WTC11 (cell line): ENCODE measurements at regions of chr2 and their contacts with region 1.

Region 1: GRCh38 chr2:113080134-113080533 is 12.4 kb downstream of the IL1F10 start:
- DNase-seq: peak; percentile 75
- ATAC-seq: peak; percentile 96
- H3K4me3 Mint-ChIP-seq: no peak overlapping the region
- H3K27ac Mint-ChIP-seq: no peak overlapping the region
- H3K4me1 Mint-ChIP-seq: peaks cover 8% of the 10 kb centered on the region
- H3K27me3 Mint-ChIP-seq: peaks cover 26% of the 10 kb centered on the region
- CTCF ChIP-seq: peak; percentile 39; the same call in 1 of the 2 replicates

Region 2: DNA sequence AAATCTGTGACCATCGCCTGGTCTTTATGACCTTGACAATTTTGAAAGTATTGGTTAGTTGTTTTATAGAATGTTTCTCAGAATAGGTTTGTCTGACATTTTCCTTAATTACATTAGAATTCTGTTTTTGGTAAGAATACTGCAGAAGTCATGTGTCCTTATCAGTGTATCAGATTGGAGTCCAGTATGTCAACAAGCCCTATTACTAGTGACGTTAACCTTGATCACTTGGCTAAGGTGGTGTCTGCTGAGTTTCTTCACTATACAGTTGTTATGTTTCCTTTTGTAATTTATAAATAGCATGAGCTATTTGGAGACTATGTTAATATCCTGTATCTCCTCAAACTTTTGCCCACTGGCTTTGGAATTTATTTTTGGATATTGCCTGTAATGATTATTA is 113.1 kb before region 1 on chr2:
- CTCF ChIA-PET with region 1: no interaction called
- POLR2A ChIA-PET with region 1: no interaction called
- DNase-seq: no peak
- ATAC-seq: no peak
- H3K4me3 Mint-ChIP-seq: no peak overlapping the region
- H3K27ac Mint-ChIP-seq: no peak overlapping the region
- H3K4me1 Mint-ChIP-seq: no peaks in the 10 kb centered on the region
- H3K27me3 Mint-ChIP-seq: peaks cover 35% of the 10 kb centered on the region
- CTCF ChIP-seq: no peak

Region 3: DNA sequence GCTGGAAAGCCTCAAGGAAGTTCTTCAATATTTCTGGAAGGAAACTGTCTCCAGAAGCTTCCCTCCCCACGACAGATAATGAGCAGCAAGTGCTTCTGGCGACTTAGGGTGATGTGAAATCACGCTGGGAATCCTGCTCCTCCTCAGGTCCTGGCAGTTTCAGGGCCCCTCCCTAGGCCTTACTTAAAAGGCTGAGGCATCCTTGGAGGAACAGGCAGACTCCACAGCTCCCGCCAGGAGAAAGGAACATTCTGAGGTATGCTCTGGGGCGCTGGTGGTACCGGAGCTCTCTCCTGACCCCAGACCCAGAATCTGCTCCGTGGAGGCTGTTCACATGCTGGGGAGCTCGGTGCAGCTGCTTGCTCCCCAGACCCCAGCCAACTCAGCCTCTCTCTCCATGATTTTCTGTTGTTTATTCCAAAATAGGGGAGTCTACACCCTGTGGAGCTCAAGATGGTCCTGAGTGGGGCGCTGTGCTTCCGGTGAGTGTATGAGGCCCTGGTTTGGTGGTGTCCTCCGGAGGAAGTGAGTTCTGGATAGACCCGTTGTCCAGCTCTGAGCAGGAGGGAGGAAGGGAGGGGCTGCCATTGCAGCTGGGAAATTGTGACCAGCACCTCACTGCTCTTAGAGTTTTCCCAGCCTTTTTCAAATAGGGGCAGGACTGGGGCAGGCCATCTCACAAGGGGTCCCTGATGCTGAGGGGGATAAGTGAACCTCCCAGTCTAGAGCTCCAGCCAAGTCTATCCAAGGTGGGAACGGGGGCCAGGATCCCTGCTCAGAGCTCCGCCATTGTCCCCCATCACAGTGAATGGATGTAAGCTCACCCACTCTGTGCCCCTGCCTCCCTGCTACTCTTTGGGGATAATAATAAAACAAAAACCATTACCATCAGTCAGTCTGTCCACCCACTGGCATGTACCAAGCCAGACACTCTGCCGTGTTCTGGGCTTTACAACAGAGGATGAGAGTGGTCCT is 20.9 kb before region 1 on chr2 and contains the start of gene IL36RN:
- CTCF ChIA-PET with region 1: interaction called, 10 read pairs
- POLR2A ChIA-PET with region 1: no interaction called
- DNase-seq: no peak
- ATAC-seq: no peak
- H3K4me3 Mint-ChIP-seq: no peak within 1 kb of the TSS
- H3K27ac Mint-ChIP-seq: no peak within 1 kb of the TSS
- H3K4me1 Mint-ChIP-seq: no peaks in the 10 kb centered on the region
- H3K27me3 Mint-ChIP-seq: peaks cover 79% of the 10 kb centered on the region
- CTCF ChIP-seq: no peak
- total RNA-seq, gene IL36RN: not detected in 3 replicates

Region 4: DNA sequence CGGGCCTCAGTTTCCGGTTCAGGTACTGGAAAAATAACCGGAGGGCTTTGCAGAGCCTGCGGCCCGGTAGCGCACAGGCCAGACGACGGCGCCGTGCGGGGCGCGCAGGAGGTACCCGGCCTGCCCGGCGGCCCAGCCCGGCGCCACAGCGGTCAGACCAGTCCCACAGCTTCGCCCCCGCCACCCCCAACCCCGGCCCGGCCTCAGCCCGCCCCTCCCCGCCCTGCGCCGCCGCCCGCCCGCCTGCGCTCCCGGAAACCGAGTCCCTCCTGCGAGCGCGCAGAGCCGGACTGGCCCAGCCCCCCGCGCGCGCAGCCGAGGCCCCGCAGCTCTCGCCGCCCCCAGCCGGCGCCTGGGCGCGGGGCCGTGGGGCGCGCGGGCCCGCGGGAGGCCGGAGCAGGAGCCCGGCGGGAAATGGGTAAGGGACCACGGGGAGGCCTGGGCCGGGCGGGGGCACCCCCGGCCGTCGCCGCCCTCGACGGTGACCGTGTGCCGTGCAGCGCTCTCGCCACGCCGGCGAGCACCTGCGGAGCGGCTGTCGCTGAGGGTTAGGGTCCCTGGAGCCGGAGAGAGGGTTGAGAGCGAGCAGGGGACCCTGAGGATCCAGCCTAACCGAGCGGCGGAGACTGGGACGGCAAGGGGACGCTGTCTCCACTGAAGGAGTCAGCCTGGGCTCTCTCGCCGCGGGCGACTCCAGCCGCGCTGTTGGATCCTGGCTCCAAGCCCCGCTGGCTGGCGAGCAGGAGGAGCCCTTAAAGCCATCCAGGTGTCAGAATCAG is 77.2 kb after region 1 on chr2:
- CTCF ChIA-PET with region 1: interaction called, 16 read pairs
- POLR2A ChIA-PET with region 1: no interaction called
- DNase-seq: peak; percentile 56
- ATAC-seq: peak; percentile 82
- H3K4me3 Mint-ChIP-seq: peak overlapping the region; percentile 65
- H3K27ac Mint-ChIP-seq: no peak overlapping the region
- H3K4me1 Mint-ChIP-seq: peaks cover 12% of the 10 kb centered on the region
- H3K27me3 Mint-ChIP-seq: peaks cover 30% of the 10 kb centered on the region
- CTCF ChIP-seq: no peak

Region 5: GRCh38 chr2:113164930-113165585 is 84.9 kb after region 1 on chr2:
- CTCF ChIA-PET with region 1: interaction called, 10 read pairs
- POLR2A ChIA-PET with region 1: no interaction called
- DNase-seq: no peak
- ATAC-seq: peak; percentile 80
- H3K4me3 Mint-ChIP-seq: no peak overlapping the region
- H3K27ac Mint-ChIP-seq: no peak overlapping the region
- H3K4me1 Mint-ChIP-seq: peaks cover 12% of the 10 kb centered on the region
- H3K27me3 Mint-ChIP-seq: peaks cover 7% of the 10 kb centered on the region; the same call in 1 of the 2 replicates
- CTCF ChIP-seq: no peak

Region 6: DNA sequence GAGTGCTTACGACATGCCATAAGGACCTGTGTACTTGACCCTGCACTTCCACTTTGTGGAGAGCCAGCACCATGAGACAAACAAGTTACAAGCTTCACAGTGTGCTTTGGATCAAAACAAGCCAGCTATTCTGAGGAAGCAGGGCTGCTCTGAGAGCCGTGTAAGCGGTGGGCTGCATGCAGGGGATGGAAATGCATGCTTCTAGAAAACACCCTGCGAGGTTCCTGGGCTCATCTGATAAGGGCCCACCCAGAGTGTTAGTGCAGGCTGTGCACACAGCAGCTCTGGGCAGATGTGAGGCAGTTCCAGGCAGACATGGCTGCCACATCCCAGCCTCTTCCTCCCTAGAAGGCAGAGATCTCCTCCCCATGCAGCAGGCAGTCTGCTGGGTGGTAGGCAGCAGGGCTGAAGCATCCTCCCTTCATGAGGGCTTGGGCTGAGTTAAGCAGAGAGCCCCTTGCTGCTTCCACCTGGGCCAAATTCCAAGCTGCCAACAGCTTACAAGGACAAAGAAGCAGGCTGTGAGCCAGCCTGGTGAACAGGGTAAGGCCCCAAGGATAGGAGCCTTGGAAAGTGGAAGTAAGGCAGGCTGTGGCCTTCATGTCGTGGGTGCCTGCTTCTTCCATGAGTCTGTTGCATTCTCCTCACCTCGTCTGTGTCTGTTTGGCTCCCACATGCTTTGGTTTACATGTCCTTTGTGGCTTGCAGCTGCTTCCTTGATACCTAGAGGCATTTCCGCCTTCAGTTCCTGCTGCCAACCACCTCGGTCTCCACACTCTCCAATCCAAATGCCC is 101.3 kb after region 1 on chr2:
- CTCF ChIA-PET with region 1: interaction called, 12 read pairs
- POLR2A ChIA-PET with region 1: no interaction called
- DNase-seq: no peak
- ATAC-seq: no peak
- H3K4me3 Mint-ChIP-seq: no peak overlapping the region
- H3K27ac Mint-ChIP-seq: no peak overlapping the region
- H3K4me1 Mint-ChIP-seq: peaks cover 13% of the 10 kb centered on the region
- H3K27me3 Mint-ChIP-seq: no peaks in the 10 kb centered on the region; the same call in 1 of the 2 replicates
- CTCF ChIP-seq: no peak

Region 7: DNA sequence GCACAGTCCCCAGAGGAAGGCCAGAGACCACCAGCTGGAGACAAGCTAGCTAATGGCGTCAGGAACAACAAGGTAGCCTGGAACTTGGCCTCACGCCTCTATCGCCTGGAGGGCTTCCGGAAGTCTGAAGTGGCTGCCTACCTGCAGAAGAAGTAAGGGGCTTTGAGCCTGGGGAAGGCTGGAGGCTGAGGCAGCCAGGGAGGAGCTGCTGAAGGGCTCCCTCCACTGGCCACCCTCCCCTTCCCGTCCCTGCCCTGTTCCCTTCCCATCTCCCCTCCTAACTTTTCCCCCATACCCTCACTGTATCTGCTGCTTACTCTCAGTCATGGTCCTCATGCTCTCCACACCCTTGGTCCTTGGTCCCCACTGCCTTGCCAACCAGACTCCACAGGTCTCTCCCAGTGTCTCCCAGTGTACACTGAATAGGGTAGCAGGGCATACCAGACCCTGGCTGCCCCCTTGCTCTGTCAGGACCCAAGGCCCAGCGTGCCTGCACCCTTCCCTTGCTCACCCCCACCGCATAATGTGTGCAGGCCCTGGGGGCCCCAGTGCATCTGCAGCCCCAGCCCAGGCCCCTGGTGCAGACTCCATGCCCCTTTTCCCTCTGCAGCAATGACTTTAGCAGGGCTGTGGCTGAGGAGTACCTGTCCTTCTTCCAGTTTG is 112.4 kb after region 1 on chr2:
- CTCF ChIA-PET with region 1: interaction called, 30 read pairs
- POLR2A ChIA-PET with region 1: no interaction called
- DNase-seq: peak; percentile 44
- ATAC-seq: peak; percentile 97
- H3K4me3 Mint-ChIP-seq: no peak overlapping the region
- H3K27ac Mint-ChIP-seq: no peak overlapping the region
- H3K4me1 Mint-ChIP-seq: peaks cover 12% of the 10 kb centered on the region
- H3K27me3 Mint-ChIP-seq: peaks cover 10% of the 10 kb centered on the region
- CTCF ChIP-seq: no peak